ENCODE measurements at regions of chr11 and their contacts with region 1.

Region 1: DNA sequence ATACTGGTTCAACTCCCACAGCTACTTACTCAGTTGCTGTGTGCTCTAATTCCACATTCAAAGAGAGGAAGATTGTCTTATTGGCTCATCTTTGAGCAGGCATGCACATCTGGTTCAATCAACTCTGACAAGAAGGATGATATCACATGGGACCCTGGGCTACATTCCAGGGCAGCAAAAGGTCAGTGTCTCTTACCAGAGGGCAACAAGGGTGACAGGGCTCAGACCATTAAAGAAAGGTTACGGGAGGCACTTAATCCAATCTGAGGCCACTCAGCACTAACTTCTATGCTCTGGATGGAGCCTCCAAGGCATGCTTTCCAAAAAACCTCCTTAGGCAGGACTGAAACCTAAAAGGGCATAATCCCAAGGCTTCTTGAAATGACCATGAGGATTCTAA is 549.4 kb upstream of the API5 start:
- DNase-seq: no peak
- ATAC-seq: no peak
- H3K4me3 ChIP-seq: no peak overlapping the region
- H3K27ac ChIP-seq: no peak overlapping the region
- H3K4me1 ChIP-seq: no peaks in the 10 kb centered on the region
- H3K27me3 ChIP-seq: no peaks in the 10 kb centered on the region

Region 2: GRCh38 chr11:42631220-42631843 is 131.0 kb before region 1 on chr11:
- intact Hi-C with region 1: no loop called
- DNase-seq: no peak
- ATAC-seq: no peak
- H3K4me3 ChIP-seq: no peak overlapping the region
- H3K27ac ChIP-seq: no peak overlapping the region
- H3K4me1 ChIP-seq: no peaks in the 10 kb centered on the region
- H3K27me3 ChIP-seq: no peaks in the 10 kb centered on the region

Region 3: DNA sequence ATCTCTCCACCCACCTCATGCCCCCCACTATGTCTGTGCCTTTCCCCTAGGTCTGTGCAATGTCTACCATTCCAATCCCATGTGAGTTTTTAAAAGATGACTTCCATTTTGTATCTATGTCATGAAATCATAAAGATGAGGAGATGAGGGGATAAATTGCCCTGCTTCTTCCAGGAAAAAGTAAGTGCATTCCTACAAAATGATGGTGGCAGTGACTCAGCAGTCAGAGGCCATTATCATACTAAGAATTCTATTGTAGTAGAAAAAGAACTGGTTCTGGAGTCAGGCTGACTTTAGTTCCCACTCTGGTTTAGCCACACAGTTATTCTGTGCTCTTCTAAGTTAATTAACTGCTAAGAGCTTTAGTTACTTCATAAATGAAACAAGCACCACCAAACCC is 459.9 kb after region 1 on chr11:
- intact Hi-C with region 1: no loop called
- DNase-seq: no peak
- ATAC-seq: no peak
- H3K4me3 ChIP-seq: no peak overlapping the region
- H3K27ac ChIP-seq: no peak overlapping the region
- H3K4me1 ChIP-seq: no peaks in the 10 kb centered on the region
- H3K27me3 ChIP-seq: no peaks in the 10 kb centered on the region

Region 4: GRCh38 chr11:43311791-43312607 is 549.7 kb after region 1 on chr11 and contains the start of gene API5:
- intact Hi-C with region 1: loop called in 1 of 4 experiments (anchors 10 kb)
- DNase-seq: peak; percentile 93 to 96 (median 95)
- ATAC-seq: peak; percentile 100
- H3K4me3 ChIP-seq: peak within 1 kb of the TSS; percentile 67
- H3K27ac ChIP-seq: peak within 1 kb of the TSS; percentile 42
- H3K4me1 ChIP-seq: no peaks in the 10 kb centered on the region
- H3K27me3 ChIP-seq: no peaks in the 10 kb centered on the region
- total RNA-seq, gene API5: 40.1 to 45.8 (median 44.6) TPM

Measured in right cardiac atrium (tissue), 5 donors.